AG04449 (cell line): ENCODE measurements at regions of chr10 and their contacts with region 1.

Region 1: GRCh38 chr10:79178614-79179163 is 109.9 kb downstream of the ZMIZ1 start:
- DNase-seq: no peak
- H3K4me3 ChIP-seq: no peak overlapping the region
- CTCF ChIP-seq: peak; percentile 6

Region 2: DNA sequence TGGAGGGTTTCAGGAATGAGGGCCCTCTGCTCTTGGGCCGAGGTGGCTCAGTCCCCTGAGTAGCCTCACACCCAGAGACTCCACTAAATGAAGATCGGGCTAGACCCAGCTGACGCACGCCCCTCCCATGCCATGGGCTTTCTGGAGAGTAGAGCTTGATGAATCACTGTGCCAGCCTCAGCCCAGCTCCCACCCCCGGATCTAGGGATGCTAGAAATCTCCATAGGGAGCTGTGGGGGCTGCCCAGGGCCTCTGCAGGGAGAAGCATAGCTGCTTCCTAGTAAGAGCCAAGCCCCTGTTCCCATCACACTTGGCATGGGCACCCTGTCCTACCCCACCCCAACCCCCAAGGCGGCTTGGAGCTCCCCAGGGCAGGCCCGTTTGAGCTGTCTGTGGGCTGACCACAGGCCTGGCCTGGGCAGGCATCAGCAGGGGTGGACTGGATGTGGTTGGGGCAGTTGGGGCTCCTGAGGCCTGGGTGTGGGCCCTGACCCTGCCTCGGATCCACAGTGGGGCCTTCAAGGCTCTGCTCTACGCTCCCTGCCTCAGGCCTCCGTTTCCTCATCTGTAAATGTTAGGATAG is 11.3 kb after region 1 on chr10:
- CTCF ChIA-PET with region 1: interaction called, 31 read pairs
- POLR2A ChIA-PET with region 1: interaction called, 3 read pairs
- DNase-seq: no peak
- H3K4me3 ChIP-seq: no peak overlapping the region
- CTCF ChIP-seq: no peak